Head of caudate nucleus (tissue), 42 donors: ENCODE measurements at regions of chr14 and their contacts with region 1.

Region 1: GRCh38 chr14:92959189-92959531 is 36.2 kb downstream of the CHGA start:
- DNase-seq: peak; percentile 47 to 90 (median 76)

Region 2: DNA sequence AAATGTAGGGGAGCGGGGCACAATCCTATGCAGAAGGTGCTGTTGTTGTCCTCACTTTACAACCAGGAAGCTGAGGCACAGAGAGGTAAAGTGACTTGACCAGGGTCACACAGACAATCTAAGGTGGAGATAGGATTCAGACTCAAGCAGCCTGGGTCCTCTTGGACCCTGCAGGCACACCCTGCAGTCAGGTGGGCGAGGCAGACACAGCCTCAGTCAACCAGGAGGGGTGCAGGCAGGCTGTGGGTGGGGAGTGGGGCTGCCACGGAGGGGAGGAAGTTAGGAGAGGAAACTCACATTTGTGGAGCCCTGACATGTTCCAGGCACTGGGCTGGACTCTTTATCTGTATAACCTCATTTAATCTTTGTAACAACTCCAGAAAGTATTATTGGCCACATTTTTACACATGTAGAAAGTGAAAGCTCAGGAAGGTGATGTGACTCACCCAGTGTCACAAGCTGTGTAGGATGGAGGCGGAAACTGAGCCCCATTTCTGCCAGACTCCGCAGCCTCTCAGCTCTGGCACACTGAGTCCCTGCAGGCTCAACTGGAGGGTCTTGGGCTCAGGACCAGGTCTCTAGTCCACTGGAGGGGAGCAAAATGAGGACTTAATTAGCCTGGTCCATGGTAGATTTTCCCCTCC is 61.1 kb before region 1 on chr14:
- intact Hi-C with region 1: no loop called
- DNase-seq: peak; percentile 13 to 84 (median 59)

Region 3: DNA sequence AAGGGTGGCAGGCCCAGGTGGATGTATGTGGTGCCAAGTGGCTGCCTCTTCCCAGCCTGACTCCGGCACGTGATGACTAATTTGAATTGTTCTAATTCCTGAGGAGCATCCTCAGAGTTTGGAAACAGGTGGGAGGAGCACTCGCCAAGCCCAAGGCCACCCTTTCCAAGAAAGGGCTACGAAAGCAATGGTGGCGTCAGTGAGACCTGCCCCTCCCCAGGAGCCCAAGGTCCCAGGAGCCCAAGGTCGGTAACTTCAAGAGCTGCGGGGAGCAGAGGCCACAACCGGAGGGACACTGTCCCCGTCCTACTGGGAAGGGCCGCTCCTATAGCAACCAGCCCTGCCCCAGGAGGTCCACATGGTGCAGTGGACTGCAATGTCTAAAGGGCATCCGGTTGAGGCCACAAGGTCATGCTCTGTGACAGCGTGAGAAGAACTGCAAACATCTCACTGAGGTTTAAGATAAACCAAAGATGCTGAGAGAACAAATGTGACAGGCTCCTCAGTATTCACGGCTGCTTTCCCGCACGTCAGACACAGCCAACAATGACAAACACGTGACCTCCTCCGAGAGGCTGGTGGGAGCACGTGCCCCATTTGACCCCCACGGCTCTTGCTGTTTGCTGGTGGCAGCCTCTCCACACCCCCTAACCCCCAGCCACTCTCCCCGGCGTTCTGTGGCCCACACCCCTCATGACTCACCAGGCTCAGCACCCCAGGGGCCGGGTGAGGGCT is 76.9 kb after region 1 on chr14:
- intact Hi-C with region 1: loop called (anchors 5 kb)
- DNase-seq: peak; percentile 85 to 98 (median 93)